ENCODE measurements at regions of chr3 and their contacts with region 1.

Region 1: GRCh38 chr3:158845765-158846350 is 44.0 kb downstream of the MFSD1 start:
- DNase-seq: no peak
- H3K4me3 ChIP-seq: no peak overlapping the region
- H3K27ac ChIP-seq: no peak overlapping the region
- H3K4me1 ChIP-seq: no peaks in the 10 kb centered on the region
- H3K27me3 ChIP-seq: no peaks in the 10 kb centered on the region
- CTCF ChIP-seq: peak; percentile 49 to 51

Region 2: GRCh38 chr3:159252772-159253384 is 407.0 kb after region 1 on chr3:
- intact Hi-C with region 1: loop called (anchors 10 kb)
- DNase-seq: no peak
- H3K4me3 ChIP-seq: no peak overlapping the region
- H3K27ac ChIP-seq: no peak overlapping the region
- H3K4me1 ChIP-seq: no peaks in the 10 kb centered on the region
- H3K27me3 ChIP-seq: peaks cover 0 to 2% of the 10 kb centered on the region in 2 donors
- CTCF ChIP-seq: no peak

Measured in tibial artery (tissue), 4 donors.